Prostate gland (tissue), 2 donors: ENCODE measurements at regions of chr6 and their contacts with region 1.

Region 1: DNA sequence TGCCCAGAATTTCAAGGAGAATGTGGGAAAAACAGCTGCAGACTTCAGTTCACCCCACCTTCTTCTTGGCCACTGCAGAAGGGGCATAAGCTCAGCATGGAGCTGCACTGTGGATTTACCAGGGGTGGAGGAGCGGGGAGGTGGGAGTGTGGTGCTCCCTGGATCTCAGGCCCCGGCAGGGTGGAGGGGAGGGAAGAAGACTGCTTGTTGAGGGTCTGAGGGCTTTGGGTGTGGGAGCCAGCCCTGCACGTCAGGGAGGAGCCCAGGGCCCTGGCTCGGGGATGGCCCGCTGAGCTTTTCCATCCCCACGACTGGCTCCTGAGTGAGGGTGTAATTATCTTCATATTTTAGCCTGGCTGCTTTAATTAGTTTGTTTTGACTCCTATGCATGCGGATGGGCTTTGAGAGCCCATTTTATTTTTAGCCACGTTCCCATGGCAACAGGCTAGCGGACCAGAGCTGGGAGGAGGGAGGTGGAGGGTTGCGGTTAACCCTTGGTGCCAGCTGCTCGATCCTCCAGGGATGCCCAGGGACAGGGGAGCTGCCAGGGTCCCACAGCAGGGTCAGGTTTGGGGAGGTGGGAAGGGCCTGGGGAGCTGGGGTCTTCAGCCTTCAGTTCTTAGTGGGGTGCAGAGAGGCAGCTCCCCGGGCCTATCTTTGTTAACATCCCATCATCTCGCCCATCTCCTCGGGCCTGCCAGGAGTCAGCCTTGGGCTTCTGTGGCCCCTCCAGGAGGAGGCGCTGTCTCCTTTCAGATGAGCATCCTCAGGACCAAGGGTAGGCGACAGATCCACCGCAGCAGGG is 68.2 kb downstream of the RAB44 start:
- DNase-seq: peak; percentile 75
- H3K4me3 ChIP-seq: no peak overlapping the region
- H3K27ac ChIP-seq: no peak overlapping the region
- H3K4me1 ChIP-seq: no peaks in the 10 kb centered on the region
- H3K27me3 ChIP-seq: no peaks in the 10 kb centered on the region
- CTCF ChIP-seq: peak; percentile 64 to 95 (median 89)
- POLR2A ChIP-seq: no peak

Region 2: GRCh38 chr6:36851149-36851614 is 85.4 kb after region 1 on chr6:
- intact Hi-C with region 1: loop called (anchors 1 kb)
- DNase-seq: peak; percentile 63
- H3K4me3 ChIP-seq: no peak overlapping the region
- H3K27ac ChIP-seq: peak overlapping the region; percentile 25 to 38
- H3K4me1 ChIP-seq: no peaks in the 10 kb centered on the region
- H3K27me3 ChIP-seq: no peaks in the 10 kb centered on the region
- CTCF ChIP-seq: peak; percentile 52 to 82 (median 78)
- POLR2A ChIP-seq: no peak

Region 3: GRCh38 chr6:36947570-36948351 is 182.0 kb after region 1 on chr6:
- intact Hi-C with region 1: no loop called
- DNase-seq: no peak
- H3K4me3 ChIP-seq: no peak overlapping the region
- H3K27ac ChIP-seq: no peak overlapping the region
- H3K4me1 ChIP-seq: no peaks in the 10 kb centered on the region
- H3K27me3 ChIP-seq: no peaks in the 10 kb centered on the region
- CTCF ChIP-seq: no peak
- POLR2A ChIP-seq: no peak